ENCODE measurements at regions of chr2 and their contacts with region 1.

Region 1: DNA sequence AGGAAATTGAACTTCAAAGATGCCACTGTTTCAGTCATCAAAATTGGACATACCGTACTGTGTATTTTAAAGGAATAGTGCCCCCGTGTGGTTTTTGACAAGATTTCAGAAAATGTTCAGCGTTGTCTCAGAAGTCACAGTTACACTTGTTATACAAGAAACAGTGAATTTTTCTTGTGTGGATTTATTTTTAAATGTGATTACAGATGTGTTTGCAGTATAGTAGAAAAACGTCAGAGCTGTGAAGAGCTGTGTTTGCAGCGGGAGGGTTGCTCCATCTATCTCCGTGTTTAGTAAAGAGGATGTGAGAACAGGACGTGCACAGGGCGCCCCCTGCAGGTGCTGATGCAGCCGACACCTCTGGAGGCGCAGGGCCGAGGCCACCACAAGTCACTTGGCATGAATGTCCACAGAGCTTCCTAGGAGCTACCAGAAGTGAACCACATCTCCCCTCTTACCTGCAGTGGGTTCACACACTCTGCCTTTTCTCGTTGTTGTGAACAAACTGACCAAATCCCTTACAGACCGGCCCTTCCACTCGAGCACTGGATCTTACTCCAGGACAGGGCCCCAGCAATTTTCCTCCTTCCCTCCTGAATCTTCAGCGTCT is 73.1 kb downstream of the CACNB4 start:
- DNase-seq: peak; percentile 81 to 95 (median 91)
- H3K4me3 ChIP-seq: peak overlapping the region in 2 of 4 donors; percentile 39 to 58
- H3K27ac ChIP-seq: peak overlapping the region in 1 of 5 donors; percentile 17
- H3K4me1 ChIP-seq: no peaks in the 10 kb centered on the region
- H3K27me3 ChIP-seq: no peaks in the 10 kb centered on the region
- CTCF ChIP-seq: peak; percentile 90 to 99 (median 98)
- POLR2A ChIP-seq: peak in 1 of 2 donors; percentile 10

Region 2: DNA sequence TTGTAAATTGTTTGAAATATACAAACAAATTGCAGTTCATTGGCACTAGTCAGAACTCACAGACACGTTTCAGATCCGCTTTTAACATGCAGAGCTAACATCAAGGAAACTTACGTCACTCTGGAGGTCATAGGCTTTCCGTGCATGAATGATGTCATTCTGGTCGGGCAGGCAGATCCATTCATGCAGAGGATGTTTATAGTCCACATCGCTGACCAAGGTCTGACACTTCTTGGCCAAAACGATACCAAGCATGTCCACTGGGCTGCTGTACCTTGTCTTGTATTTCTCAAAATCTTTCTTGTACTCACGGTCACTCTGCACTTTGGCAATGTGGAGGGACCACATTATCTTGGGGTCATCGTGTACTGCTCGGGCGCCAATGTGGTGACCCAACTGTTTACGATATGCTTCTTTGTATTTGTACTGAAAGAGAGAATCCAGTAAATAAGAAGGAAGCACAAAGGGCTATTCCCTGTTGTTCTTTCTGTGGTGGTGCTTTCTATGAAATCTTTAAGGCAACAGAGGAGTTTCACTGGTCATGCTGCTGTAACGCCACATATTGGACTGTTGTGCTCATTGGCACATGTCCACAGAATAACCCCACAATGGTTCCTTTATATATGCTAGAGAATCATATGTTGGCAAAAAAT is 406.3 kb before region 1 on chr2:
- intact Hi-C with region 1: loop called in 1 of 2 experiments (anchors 10 kb)
- DNase-seq: peak; percentile 26 to 67 (median 51)
- H3K4me3 ChIP-seq: peak overlapping the region in 1 of 4 donors; percentile 9
- H3K27ac ChIP-seq: peak overlapping the region in 1 of 5 donors; percentile 39
- H3K4me1 ChIP-seq: peaks cover 0 to 31% of the 10 kb centered on the region in 2 donors
- H3K27me3 ChIP-seq: no peaks in the 10 kb centered on the region
- CTCF ChIP-seq: peak in 3 of 6 experiments; percentile 21 to 36 (median 35)
- POLR2A ChIP-seq: no peak

Region 3: DNA sequence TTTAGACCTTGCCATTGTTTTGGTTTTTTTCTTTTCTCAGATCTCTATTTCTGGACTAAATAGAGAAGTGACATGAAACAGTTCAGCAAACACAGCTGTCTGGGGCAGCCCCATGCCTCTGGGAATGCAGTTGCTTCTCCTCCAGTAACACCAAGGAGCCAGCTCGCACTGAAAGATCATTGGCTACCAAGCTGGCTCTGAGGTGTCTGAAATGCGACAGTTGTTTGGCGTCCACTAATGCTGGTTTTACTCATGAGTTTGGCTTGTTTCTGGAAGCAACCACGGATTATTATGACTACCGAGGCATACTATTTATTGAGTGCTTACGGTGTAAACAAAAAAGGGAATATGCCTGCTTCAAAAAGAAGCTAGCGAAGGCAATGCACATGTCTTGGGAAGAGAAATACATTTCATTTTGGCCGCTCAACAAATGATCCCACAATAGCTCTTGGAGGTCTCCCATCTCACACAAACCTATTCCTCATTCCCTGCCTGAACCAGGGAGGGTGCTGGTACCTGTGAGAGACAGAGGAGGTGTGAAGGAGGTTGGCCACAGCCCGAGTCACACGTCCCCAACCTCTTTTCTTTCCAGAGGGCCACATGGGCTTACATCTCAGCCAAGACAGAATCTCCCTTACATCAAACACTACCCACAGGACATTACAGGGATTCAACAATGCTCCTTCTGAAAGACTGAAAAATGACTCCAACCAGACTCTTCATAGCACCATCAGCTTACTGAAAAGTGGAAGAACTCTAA is 254.0 kb before region 1 on chr2:
- intact Hi-C with region 1: no loop called
- DNase-seq: no peak
- H3K4me3 ChIP-seq: no peak overlapping the region
- H3K27ac ChIP-seq: no peak overlapping the region
- H3K4me1 ChIP-seq: peaks cover 5 to 14% of the 10 kb centered on the region in 2 donors
- H3K27me3 ChIP-seq: no peaks in the 10 kb centered on the region
- CTCF ChIP-seq: no peak
- POLR2A ChIP-seq: no peak

Region 4: GRCh38 chr2:151819920-151820319 is 205.9 kb before region 1 on chr2:
- intact Hi-C with region 1: loop called in 1 of 2 experiments (anchors 10 kb)
- DNase-seq: no peak
- H3K4me3 ChIP-seq: no peak overlapping the region
- H3K27ac ChIP-seq: no peak overlapping the region
- H3K4me1 ChIP-seq: peaks cover 0 to 46% of the 10 kb centered on the region in 2 donors
- H3K27me3 ChIP-seq: no peaks in the 10 kb centered on the region
- CTCF ChIP-seq: no peak
- POLR2A ChIP-seq: no peak

Region 5: GRCh38 chr2:151946899-151947822 is 78.6 kb before region 1 on chr2:
- intact Hi-C with region 1: no loop called
- DNase-seq: peak; percentile 46 to 79 (median 68)
- H3K4me3 ChIP-seq: peak overlapping the region in 2 of 4 donors; percentile 11 to 56
- H3K27ac ChIP-seq: peak overlapping the region; percentile 20 to 78 (median 68)
- H3K4me1 ChIP-seq: peaks cover 7 to 22% of the 10 kb centered on the region in 2 donors
- H3K27me3 ChIP-seq: no peaks in the 10 kb centered on the region
- CTCF ChIP-seq: peak; percentile 39 to 77 (median 65)
- POLR2A ChIP-seq: no peak

Region 6: GRCh38 chr2:152189622-152190495 is 164.1 kb after region 1 on chr2:
- intact Hi-C with region 1: no loop called
- DNase-seq: peak; percentile 50 to 78 (median 59)
- H3K4me3 ChIP-seq: no peak overlapping the region
- H3K27ac ChIP-seq: no peak overlapping the region
- H3K4me1 ChIP-seq: no peaks in the 10 kb centered on the region
- H3K27me3 ChIP-seq: no peaks in the 10 kb centered on the region
- CTCF ChIP-seq: peak; percentile 44 to 89 (median 86)
- POLR2A ChIP-seq: no peak

Region 7: GRCh38 chr2:152278526-152278925 is 252.7 kb after region 1 on chr2:
- intact Hi-C with region 1: no loop called
- DNase-seq: no peak
- H3K4me3 ChIP-seq: no peak overlapping the region
- H3K27ac ChIP-seq: no peak overlapping the region
- H3K4me1 ChIP-seq: no peaks in the 10 kb centered on the region
- H3K27me3 ChIP-seq: no peaks in the 10 kb centered on the region
- CTCF ChIP-seq: no peak
- POLR2A ChIP-seq: no peak